HEK293T (cell line): ENCODE measurements at regions of chr17 and their contacts with region 1.

Region 1: GRCh38 chr17:74368092-74369081 is 1.1 kb downstream of the GPR142 start:
- DNase-seq: peak; percentile 82

Region 2: GRCh38 chr17:74235040-74235581 is 133.3 kb before region 1 on chr17:
- CTCF ChIA-PET with region 1: no interaction called
- POLR2A ChIA-PET with region 1: no interaction called
- DNase-seq: no peak

Region 3: GRCh38 chr17:74296548-74296936 is 71.8 kb before region 1 on chr17:
- CTCF ChIA-PET with region 1: interaction called, 12 read pairs
- POLR2A ChIA-PET with region 1: no interaction called
- DNase-seq: peak; percentile 56

Region 4: DNA sequence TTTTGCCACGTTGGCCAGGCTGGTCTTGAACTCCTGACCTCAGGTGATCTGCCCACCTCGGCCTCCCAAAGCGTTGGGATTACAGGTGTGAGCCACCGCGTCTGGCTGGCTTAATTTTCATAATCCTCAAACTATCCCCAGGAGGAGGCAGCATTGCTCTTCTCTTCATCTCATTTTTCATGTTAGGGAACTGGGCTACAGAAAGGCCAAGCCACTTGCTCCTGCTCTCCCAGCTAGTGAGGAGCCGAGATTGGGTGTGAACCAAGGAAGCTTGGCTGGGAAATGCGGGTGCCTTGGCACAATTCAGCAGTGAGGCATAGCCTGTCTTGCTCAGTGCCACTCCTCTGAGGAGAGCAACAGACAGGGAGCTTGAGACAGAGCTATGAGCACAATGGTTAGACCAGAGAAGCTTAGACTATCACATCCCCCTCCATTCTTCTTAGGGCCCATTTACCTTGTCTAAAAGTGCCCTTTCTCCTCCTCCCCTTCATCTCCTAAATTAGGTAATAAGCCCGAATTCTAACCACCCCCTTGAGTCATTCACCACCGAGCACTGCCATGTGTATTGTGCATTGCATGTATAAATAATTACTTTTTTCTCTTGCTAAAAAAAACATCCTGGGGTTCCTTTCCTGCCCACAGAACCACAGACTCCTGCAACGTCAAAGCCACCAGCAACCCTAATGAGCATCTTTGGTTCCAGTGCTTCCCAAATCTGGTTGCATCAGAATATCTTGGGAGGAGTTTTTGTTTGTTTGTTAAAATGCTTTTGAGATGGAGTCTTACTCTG is 62.3 kb before region 1 on chr17:
- CTCF ChIA-PET with region 1: interaction called, 13 read pairs
- POLR2A ChIA-PET with region 1: no interaction called
- DNase-seq: no peak

Region 5: GRCh38 chr17:74379495-74380085 is 11.2 kb after region 1 on chr17:
- CTCF ChIA-PET with region 1: interaction called, 32 read pairs
- POLR2A ChIA-PET with region 1: interaction called, 4 read pairs
- DNase-seq: peak; percentile 94

Region 6: GRCh38 chr17:74403512-74404137 is 35.2 kb after region 1 on chr17:
- CTCF ChIA-PET with region 1: no interaction called
- POLR2A ChIA-PET with region 1: no interaction called
- DNase-seq: no peak

Region 7: GRCh38 chr17:74457146-74457819 is 88.9 kb after region 1 on chr17:
- CTCF ChIA-PET with region 1: interaction called, 15 read pairs
- POLR2A ChIA-PET with region 1: no interaction called
- DNase-seq: peak; percentile 83